Tibial artery (tissue), 4 donors: ENCODE measurements at regions of chr19 and their contacts with region 1.

Region 1: GRCh38 chr19:55866521-55866920 is 30.2 kb downstream of the NLRP4 start:
- DNase-seq: no peak
- H3K4me3 ChIP-seq: no peak overlapping the region
- H3K27ac ChIP-seq: no peak overlapping the region
- H3K4me1 ChIP-seq: no peaks in the 10 kb centered on the region
- H3K27me3 ChIP-seq: no peaks in the 10 kb centered on the region
- CTCF ChIP-seq: no peak

Region 2: GRCh38 chr19:55830656-55831055 is 35.9 kb before region 1 on chr19:
- intact Hi-C with region 1: no loop called
- DNase-seq: no peak
- H3K4me3 ChIP-seq: no peak overlapping the region
- H3K27ac ChIP-seq: no peak overlapping the region
- H3K4me1 ChIP-seq: no peaks in the 10 kb centered on the region
- H3K27me3 ChIP-seq: no peaks in the 10 kb centered on the region
- CTCF ChIP-seq: no peak

Region 3: DNA sequence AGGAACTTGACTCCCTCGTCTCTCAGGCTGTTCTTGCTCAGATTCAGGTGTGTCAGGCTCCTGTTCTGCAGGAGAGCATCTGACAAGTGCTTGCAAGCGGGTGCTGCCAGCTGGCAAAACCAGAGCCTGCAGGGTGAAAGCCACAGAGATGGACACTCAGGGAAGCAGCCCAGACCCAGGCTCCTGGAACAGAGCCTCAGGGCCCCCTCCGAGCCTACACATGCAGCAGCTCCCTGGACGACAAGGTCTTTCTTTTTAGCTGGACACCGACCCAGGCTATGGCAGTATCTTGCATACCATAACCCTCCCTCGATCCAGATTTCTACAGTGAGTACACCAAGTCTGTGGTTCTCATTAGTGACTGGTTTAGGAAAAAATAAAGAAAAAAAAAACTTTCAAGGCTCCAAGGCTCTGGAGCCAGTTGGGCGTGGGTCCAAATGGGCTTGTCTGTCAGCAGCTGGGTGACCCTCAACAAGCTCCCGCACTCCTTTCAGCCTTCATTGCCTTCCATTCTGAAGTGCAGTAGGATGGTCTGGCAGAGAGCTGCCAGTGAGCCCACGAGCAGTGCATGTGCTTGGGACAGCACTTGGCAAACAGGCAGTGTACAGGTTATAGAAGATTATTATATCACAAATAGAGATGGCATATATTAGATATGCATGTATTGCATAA is 35.7 kb after region 1 on chr19:
- intact Hi-C with region 1: no loop called
- DNase-seq: no peak
- H3K4me3 ChIP-seq: no peak overlapping the region
- H3K27ac ChIP-seq: no peak overlapping the region
- H3K4me1 ChIP-seq: no peaks in the 10 kb centered on the region
- H3K27me3 ChIP-seq: no peaks in the 10 kb centered on the region
- CTCF ChIP-seq: no peak

Region 4: DNA sequence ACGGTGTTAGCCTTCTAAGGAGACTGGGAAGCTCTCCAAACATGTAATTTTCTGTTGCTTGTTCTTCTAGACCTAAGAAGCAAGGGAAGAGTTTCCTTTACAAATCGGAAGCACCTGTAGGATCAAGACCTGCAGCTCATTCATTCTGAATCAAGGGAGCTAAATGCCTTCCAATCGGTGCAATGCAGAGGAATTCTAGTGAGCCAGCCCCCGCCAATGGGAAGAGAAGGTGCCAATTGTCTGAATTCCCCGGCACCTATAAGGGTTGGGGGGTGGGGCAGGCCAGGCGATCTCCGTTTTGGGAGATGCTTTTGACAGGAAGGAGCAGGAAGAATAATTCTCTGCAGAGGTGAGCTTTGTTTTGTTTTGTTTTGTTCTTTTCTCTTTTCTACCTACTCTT is 72.7 kb after region 1 on chr19:
- intact Hi-C with region 1: no loop called
- DNase-seq: no peak
- H3K4me3 ChIP-seq: no peak overlapping the region
- H3K27ac ChIP-seq: no peak overlapping the region
- H3K4me1 ChIP-seq: no peaks in the 10 kb centered on the region
- H3K27me3 ChIP-seq: no peaks in the 10 kb centered on the region
- CTCF ChIP-seq: no peak

Region 5: GRCh38 chr19:55973982-55974381 is 107.5 kb after region 1 on chr19:
- intact Hi-C with region 1: no loop called
- DNase-seq: no peak
- H3K4me3 ChIP-seq: no peak overlapping the region
- H3K27ac ChIP-seq: no peak overlapping the region
- H3K4me1 ChIP-seq: no peaks in the 10 kb centered on the region
- H3K27me3 ChIP-seq: no peaks in the 10 kb centered on the region
- CTCF ChIP-seq: no peak

Region 6: GRCh38 chr19:57443120-57443696 is 1576.7 kb after region 1 on chr19:
- intact Hi-C with region 1: loop called (anchors 5 kb)
- DNase-seq: no peak
- H3K4me3 ChIP-seq: no peak overlapping the region
- H3K27ac ChIP-seq: no peak overlapping the region
- H3K4me1 ChIP-seq: no peaks in the 10 kb centered on the region
- H3K27me3 ChIP-seq: no peaks in the 10 kb centered on the region
- CTCF ChIP-seq: no peak